ENCODE measurements at regions of chr19 and their contacts with region 1.

Region 1: DNA sequence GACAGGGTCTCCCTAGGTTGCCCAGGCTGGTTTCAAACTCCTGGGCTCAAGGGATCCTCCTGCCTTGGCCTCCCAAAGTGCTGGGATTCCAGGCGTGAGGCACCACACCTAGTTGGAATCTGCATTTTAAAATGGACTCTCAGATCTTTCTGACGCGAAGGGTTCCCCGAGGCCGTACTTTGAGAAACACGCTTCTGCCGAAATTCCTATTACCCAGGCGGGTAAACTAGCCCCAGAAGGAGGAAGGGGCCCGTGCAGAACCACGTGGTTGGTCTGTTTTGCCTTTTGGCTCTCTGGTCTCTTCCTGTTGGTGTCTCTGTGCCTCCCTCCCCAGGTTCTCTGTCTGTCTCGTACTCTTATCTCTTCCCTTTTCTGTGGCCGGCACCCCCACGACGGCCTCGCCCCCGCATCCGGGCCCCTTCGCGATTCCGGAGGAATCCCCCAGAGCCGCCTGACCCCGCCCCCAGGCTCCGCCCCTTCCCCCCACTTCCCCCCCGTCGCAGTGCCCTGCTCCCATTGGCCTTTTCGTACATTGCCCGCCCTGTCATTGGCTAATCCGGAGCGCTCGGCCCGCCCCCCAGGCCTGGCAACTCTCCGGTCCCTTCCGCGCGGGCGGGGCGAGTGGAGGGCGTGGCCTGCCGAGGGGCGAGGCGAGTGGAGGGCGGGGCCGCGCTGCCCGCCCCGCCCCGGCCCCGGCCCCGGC is at the start of gene TNFAIP8L1:
- DNase-seq: peak; percentile 97
- H3K4me3 ChIP-seq: peak within 1 kb of the TSS; percentile 89
- H3K27ac ChIP-seq: peak within 1 kb of the TSS; percentile 80
- H3K4me1 ChIP-seq: peaks cover 21% of the 10 kb centered on the region
- H3K27me3 ChIP-seq: no peaks in the 10 kb centered on the region
- CTCF ChIP-seq: no peak
- total RNA-seq, gene TNFAIP8L1: 24.7 and 25.4 TPM in 2 replicates

Region 2: DNA sequence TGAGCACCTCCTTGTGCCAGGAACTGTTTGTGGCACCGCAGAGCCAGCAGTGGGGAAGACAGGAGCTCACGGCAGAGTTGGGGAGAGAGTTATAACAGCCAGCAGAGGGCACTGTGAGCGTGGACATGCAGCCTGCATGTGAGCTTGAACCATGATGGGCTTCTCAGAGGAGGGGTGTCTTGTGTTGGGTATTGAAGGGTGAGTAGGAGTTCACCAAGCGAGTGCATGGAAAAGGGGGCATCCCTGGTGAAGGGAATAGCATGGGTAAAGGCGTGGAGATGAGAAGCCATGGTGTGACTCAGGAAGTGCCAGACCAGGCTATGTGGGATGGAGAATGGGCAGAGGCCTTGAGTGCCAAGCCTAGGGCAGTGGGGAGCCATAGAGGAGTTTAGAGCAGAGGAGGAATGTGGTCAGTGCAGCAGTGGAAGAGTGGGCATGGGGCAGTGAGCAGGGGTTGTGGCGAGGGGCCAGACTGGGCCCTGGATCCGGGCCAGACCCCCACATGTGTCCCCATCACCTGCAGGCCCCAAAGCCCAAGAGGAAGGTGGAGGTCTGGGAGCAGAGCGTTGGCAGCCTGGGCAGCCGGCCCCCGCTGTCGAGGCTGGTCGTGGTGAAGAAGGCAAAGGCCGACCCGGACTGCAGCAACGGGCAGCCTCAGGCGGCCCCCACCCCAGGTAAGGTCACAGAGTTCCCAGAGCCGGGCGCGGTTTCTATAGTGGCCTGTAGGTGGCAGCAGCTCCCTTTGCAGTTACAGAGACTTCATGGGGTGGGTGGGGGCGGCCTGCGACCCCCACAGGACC is 371.7 kb before region 1 on chr19:
- CTCF ChIA-PET with region 1: interaction called, 12 read pairs
- POLR2A ChIA-PET with region 1: no interaction called
- intact Hi-C with region 1: no loop called
- DNase-seq: peak; percentile 76
- H3K4me3 ChIP-seq: no peak overlapping the region
- H3K27ac ChIP-seq: no peak overlapping the region
- H3K4me1 ChIP-seq: no peaks in the 10 kb centered on the region
- H3K27me3 ChIP-seq: no peaks in the 10 kb centered on the region
- CTCF ChIP-seq: peak; percentile 80

Region 3: DNA sequence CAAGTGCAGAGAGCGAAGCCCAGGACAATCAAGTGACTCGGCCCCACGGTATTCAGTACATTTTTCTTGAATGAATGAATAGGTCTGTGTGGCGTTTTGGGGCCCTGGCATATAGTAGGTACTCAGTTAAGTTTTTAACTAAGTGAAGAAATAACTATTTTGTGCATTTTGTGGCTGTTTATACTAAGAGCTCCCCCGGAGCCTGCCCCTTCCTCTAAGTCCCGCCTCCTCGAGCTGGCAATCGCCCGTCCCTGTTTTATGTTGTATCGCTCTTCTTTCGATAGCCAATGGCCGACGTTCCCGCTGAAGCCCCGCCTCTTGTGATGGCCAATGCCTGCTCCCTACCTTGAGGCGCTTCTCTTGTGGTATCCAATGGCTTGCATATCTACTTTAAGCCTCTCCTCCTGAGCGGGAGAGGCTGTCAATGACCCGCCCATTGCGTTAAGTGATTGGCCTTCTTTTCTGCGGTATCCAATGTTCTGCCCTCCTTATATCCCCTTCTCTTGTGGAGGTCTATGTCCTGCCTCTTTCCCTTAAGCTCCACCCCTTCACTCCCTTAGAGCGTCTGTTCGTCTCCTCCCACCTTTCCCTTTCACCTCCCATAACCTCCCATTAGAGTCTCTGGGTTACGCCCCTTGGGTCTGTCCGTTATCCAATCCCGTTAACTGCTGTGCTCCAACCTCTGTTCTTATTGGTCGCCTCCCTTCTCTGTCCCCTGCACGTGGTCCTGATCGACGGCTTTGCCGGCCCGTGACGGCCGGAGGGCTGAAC is 167.4 kb before region 1 on chr19:
- CTCF ChIA-PET with region 1: no interaction called
- POLR2A ChIA-PET with region 1: no interaction called
- intact Hi-C with region 1: no loop called
- DNase-seq: peak; percentile 100
- H3K4me3 ChIP-seq: peak overlapping the region; percentile 99
- H3K27ac ChIP-seq: peak overlapping the region; percentile 71
- H3K4me1 ChIP-seq: no peaks in the 10 kb centered on the region
- H3K27me3 ChIP-seq: no peaks in the 10 kb centered on the region
- CTCF ChIP-seq: no peak

Region 4: GRCh38 chr19:4508701-4509100 is 130.3 kb before region 1 on chr19:
- CTCF ChIA-PET with region 1: no interaction called
- POLR2A ChIA-PET with region 1: interaction called, 13 read pairs
- intact Hi-C with region 1: no loop called
- DNase-seq: no peak
- H3K4me3 ChIP-seq: no peak overlapping the region
- H3K27ac ChIP-seq: no peak overlapping the region
- H3K4me1 ChIP-seq: no peaks in the 10 kb centered on the region
- H3K27me3 ChIP-seq: no peaks in the 10 kb centered on the region
- CTCF ChIP-seq: no peak

Region 5: GRCh38 chr19:4557971-4558941 is 80.7 kb before region 1 on chr19:
- CTCF ChIA-PET with region 1: interaction called, 4 read pairs
- POLR2A ChIA-PET with region 1: no interaction called
- intact Hi-C with region 1: loop called (anchors 2 kb)
- DNase-seq: peak; percentile 39
- H3K4me3 ChIP-seq: peak overlapping the region; percentile 19
- H3K27ac ChIP-seq: no peak overlapping the region
- H3K4me1 ChIP-seq: no peaks in the 10 kb centered on the region
- H3K27me3 ChIP-seq: no peaks in the 10 kb centered on the region
- CTCF ChIP-seq: peak; percentile 93

Region 6: DNA sequence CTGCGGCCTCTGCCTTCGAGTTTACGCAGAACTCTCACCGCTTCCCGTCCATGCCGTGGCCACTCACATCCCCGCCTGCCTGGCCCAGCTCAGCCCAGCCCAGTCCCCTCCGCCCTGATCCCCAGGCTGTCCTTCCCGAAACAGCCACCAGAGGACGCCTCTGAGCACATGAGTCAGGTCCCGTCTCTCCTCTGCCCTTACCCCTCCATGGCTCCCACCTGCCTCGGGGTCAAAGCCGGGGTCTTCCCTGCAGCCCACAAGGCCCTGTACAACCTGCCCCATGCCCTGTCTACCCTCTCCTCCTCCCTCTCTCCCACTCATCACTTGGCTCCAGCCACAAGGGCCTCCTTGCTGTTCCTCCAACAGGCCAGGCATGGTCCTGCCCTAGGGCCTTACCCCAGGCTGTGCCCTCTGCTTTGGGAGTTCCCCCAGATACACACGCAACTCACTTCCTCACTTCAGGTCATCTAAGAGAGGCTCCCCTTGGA is 71.4 kb before region 1 on chr19:
- CTCF ChIA-PET with region 1: interaction called, 12 read pairs
- POLR2A ChIA-PET with region 1: no interaction called
- intact Hi-C with region 1: no loop called
- DNase-seq: peak; percentile 61
- H3K4me3 ChIP-seq: no peak overlapping the region
- H3K27ac ChIP-seq: no peak overlapping the region
- H3K4me1 ChIP-seq: no peaks in the 10 kb centered on the region
- H3K27me3 ChIP-seq: no peaks in the 10 kb centered on the region
- CTCF ChIP-seq: peak; percentile 88

Region 7: GRCh38 chr19:4576016-4576933 is 62.7 kb before region 1 on chr19:
- CTCF ChIA-PET with region 1: interaction called, 6 read pairs
- POLR2A ChIA-PET with region 1: no interaction called
- intact Hi-C with region 1: loop called (anchors 5 kb)
- DNase-seq: peak; percentile 59
- H3K4me3 ChIP-seq: no peak overlapping the region
- H3K27ac ChIP-seq: no peak overlapping the region
- H3K4me1 ChIP-seq: peaks cover 24% of the 10 kb centered on the region
- H3K27me3 ChIP-seq: peaks cover 9% of the 10 kb centered on the region
- CTCF ChIP-seq: peak; percentile 84

Measured in A673 (cell line).